Posterior vena cava (tissue), 2 donors: ENCODE measurements at regions of chr17 and their contacts with region 1.

Region 1: GRCh38 chr17:26731005-26731921 is 562.7 kb upstream of the WSB1 start:
- DNase-seq: peak; percentile 78

Region 2: GRCh38 chr17:26765860-26766709 is 34.8 kb after region 1 on chr17:
- intact Hi-C with region 1: no loop called
- DNase-seq: peak; percentile 67

Region 3: GRCh38 chr17:26818736-26819135 is 87.5 kb after region 1 on chr17:
- intact Hi-C with region 1: loop called in 1 of 2 experiments (anchors 10 kb)
- DNase-seq: no peak

Region 4: DNA sequence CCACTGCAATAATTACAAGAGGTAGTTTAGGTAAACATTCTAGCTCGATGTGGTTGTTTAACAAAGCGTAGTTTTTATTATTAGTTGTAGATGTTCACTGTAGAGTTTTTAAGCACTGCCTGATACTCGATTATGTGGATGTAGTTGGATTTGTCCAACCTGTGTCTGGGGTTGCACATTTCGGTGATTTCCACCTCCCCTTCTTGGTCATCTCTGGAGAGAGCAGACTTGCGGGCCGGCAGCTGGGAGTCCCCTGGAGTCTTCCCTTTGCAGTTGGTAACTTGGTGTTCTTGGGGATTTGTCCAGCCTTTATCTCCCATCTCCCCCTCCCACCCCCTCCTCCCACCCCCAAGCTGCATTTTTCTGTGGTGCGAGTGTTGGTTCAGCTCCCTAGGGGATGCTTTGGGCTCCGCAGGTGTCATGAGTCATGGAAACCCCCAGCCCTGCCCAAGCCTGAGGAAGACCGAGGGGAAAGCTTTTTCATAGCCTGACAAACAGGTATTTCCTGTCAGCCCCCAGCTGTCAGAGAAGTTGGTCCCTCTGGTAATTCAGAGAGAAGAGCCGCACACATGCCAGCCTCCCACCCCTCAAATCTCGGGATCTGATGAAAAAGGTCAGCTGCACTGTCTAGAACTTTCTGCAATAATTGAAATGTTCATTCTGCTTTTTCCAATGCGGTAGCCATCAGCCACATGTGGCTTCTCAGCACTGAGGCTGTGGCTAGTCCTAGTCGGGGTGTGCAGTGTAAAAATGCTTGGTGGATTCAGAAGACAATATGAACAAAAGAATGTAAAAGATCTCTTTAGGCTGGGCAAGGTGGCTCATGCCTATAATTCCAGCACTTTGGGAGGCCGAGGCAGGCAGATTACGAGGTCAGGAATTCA is 775.3 kb after region 1 on chr17:
- intact Hi-C with region 1: no loop called
- DNase-seq: no peak

Region 5: DNA sequence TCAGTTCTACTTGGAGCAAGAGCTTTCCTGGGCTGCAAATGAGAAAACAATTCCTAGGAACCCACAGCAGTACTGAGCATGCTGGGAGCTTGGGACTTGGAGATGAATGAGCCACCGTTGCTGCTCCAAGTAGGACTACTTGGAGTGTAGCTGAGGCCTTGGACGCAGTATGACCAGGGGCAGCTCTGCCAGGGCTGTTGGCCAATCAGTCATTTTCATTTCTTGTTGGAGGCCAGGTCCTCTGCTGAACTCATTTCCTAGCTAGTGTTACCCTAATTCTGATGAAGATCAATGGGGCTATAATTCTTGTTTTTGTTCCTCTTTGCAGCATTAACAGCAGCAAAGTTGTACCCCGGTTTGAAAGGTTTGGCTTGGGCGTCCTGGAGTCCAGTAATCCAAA is 891.7 kb after region 1 on chr17:
- intact Hi-C with region 1: no loop called
- DNase-seq: no peak